ENCODE measurements at regions of chr4 and their contacts with region 1.

Region 1: DNA sequence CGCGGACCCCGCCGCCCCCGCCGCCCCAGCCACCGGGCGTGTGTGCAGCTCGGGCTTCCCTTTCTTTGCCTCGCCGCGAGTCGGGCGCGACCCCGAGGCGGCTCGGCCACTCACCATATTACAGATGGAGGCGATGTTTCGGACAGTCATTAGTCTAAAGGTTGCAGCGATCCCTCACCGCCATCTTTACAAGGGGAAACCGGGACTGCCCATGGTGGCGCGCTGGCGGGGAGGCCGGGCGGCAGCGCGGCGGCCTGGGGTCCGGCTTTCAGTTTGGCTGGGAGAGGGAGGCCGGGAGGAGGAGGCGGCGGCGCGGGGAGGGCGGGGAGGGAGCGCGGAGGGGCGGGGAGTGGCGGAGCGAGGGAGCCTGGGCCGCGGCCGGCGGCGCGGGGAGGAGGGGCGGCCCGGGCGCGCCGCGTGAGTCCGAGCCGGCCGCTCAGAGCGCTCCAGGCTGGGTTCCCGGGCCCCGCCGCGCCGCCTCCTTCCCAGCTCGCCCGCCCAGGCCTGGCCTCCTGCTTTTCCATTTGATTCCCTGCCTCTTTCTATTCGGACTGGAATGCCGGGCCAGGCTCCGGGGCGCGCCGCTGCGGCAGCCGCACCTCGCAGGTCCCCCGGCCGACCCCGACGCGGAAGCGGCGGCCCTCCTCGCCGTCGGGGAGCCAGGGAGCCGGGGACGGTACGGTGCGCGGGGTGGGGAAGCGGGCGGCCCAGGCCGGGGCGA is at the start of gene USP46:
- DNase-seq: peak; percentile 69 to 79
- H3K4me3 ChIP-seq: peak within 1 kb of the TSS; percentile 77
- H3K4me3 Mint-ChIP-seq: peak within 1 kb of the TSS; percentile 84
- H3K27ac Mint-ChIP-seq: peak within 1 kb of the TSS; percentile 39
- H3K4me1 ChIP-seq: peaks cover 16% of the 10 kb centered on the region; the same call in 1 of the 2 replicates
- H3K4me1 Mint-ChIP-seq: peaks cover 36% of the 10 kb centered on the region
- H3K27me3 ChIP-seq: no peaks in the 10 kb centered on the region
- H3K27me3 Mint-ChIP-seq: no peaks in the 10 kb centered on the region
- CTCF ChIP-seq: no peak
- total RNA-seq, gene USP46: 26.4 and 32.2 TPM in 2 replicates

Region 2: GRCh38 chr4:52234561-52235440 is 424.4 kb before region 1 on chr4:
- CTCF ChIA-PET with region 1: no interaction called
- POLR2A ChIA-PET with region 1: no interaction called
- intact Hi-C with region 1: loop called (anchors 10 kb)
- DNase-seq: peak in 1 of 2 experiments; percentile 34
- H3K4me3 ChIP-seq: no peak overlapping the region
- H3K4me3 Mint-ChIP-seq: no peak overlapping the region
- H3K27ac Mint-ChIP-seq: no peak overlapping the region
- H3K4me1 ChIP-seq: no peaks in the 10 kb centered on the region
- H3K4me1 Mint-ChIP-seq: no peaks in the 10 kb centered on the region
- H3K27me3 ChIP-seq: no peaks in the 10 kb centered on the region
- H3K27me3 Mint-ChIP-seq: peaks cover 8% of the 10 kb centered on the region
- CTCF ChIP-seq: peak; percentile 43 to 57

Region 3: DNA sequence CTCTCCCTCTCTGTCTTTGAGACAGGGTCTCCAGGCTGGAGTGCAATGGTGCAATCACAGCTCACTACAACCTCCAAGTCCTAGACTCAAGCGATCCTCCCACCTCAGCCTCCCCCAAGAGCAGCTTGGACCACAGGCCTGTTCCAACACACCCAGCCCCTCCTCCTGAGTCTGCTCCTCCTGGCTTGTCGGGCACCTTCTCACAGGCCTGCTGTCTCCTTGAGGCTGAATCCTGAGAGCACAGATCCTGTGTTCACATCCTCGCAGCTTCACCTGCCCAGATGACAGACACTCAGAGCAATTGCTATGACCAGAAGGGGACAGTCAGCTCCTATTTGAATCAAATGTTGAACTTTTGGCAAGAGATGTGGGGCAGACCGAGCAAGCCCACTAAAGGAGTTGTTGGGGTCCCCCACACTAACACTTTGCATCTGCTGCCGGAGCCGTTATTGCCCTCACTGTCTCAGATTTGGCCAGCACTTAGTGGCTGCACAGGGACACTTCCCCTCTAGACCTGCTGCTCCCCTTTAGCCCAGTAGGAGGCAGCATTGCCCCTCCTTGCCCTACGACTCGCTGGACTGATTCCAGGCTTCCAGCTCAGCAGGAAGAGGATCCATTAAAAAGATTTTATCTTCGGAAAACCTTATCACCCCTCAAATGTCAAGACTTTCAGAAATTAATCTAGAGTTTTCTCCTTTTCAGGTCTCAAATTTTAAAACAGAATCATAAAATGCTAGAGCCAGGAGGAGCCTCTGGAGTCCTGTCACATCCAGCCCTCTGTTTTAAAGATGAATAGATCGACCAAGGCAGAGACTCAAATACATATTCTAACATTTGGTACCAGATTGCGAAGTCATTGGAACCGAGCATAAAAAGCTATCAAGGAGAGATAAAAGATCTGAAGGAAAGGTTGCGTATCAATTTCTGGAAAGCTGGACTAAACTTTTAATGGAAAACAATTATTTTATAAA is 113.8 kb before region 1 on chr4:
- CTCF ChIA-PET with region 1: no interaction called
- POLR2A ChIA-PET with region 1: no interaction called
- intact Hi-C with region 1: loop called (anchors 10 kb)
- DNase-seq: peak; percentile 49 to 74
- H3K4me3 ChIP-seq: no peak overlapping the region
- H3K4me3 Mint-ChIP-seq: no peak overlapping the region
- H3K27ac Mint-ChIP-seq: no peak overlapping the region
- H3K4me1 ChIP-seq: no peaks in the 10 kb centered on the region
- H3K4me1 Mint-ChIP-seq: no peaks in the 10 kb centered on the region
- H3K27me3 ChIP-seq: no peaks in the 10 kb centered on the region; the same call in none of the 2 replicates
- H3K27me3 Mint-ChIP-seq: no peaks in the 10 kb centered on the region
- CTCF ChIP-seq: peak; percentile 84

Region 4: DNA sequence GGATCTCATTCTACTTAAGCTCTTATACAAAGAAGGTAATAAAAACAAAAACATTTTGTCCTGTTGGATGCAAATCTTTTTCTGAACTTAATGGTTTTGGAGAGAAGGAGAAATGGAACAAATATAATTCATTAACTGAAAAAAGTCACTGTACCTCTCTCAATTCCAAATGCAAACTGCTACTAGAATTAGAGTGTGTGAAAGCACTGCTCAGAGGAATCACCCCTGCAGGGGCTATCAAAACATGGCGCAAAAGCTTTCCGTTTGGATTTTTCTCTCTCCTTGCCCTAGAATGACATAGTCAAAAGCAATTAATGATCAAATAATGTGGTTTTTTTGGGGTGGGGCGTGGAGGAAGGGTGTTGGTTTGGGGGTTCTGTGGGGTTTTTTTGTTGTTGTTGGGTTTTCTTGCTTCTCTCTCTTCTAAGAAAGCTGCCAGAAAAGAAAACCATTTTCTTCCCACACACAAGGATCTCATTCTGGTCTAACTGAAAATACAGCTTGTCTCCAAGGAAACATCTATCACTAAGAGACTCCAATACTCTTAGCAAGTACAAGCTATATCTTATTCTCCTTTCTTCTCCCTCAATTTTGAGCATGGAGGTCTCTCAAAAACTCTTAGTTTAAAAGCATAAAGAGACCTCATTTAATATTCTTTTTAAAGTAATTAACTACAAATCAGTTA is 41.7 kb before region 1 on chr4:
- CTCF ChIA-PET with region 1: no interaction called
- POLR2A ChIA-PET with region 1: no interaction called
- intact Hi-C with region 1: loop called (anchors 5 kb)
- DNase-seq: no peak
- H3K4me3 ChIP-seq: no peak overlapping the region
- H3K4me3 Mint-ChIP-seq: no peak overlapping the region
- H3K27ac Mint-ChIP-seq: no peak overlapping the region
- H3K4me1 ChIP-seq: no peaks in the 10 kb centered on the region
- H3K4me1 Mint-ChIP-seq: peaks cover 10% of the 10 kb centered on the region
- H3K27me3 ChIP-seq: no peaks in the 10 kb centered on the region
- H3K27me3 Mint-ChIP-seq: no peaks in the 10 kb centered on the region
- CTCF ChIP-seq: no peak

Region 5: DNA sequence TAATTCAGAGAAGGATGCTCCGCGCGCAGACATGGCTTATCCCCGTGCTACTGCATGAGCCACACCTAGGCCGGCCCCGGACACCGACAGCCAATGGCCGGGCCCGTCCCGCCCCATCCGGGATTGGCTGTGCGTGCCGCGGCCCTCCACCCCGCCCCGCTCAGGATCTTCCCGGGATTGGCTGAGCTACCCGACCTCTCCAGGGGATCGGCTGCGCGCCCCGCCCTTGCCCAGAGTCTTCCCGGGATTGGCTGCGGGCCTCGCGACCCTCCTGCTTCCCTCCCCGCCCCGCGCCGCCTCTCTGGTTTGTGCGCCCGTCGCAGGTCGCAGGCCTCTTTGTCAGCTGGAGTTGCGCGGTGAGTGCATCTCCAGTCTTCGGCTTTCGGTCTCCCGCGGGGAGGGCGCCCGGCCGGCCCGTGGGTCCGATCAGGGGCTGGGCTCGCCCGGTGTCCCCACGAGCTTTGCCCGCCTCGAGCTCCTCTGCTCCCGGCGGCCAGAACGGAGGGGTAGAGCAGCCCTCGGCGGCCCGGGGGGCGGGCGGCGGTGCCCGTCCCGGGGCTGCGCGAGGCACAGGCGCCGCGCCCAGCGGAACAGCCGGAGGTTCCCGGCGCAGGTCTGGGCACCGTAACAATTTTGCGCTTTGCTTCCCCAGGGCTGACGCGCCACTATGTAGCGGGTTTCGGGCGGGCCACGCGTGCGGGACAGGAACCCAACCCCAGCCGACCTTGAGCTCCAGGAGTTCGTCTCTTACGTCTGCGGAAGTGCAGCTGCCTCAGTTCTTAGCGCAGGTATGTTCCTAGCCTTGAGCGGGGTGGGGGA is 53.2 kb after region 1 on chr4:
- CTCF ChIA-PET with region 1: no interaction called
- POLR2A ChIA-PET with region 1: interaction called, 28 read pairs
- intact Hi-C with region 1: loop called (anchors 1 kb)
- DNase-seq: peak; percentile 98 to 99
- H3K4me3 ChIP-seq: peak overlapping the region; percentile 73
- H3K4me3 Mint-ChIP-seq: peak overlapping the region; percentile 88
- H3K27ac Mint-ChIP-seq: peak overlapping the region; percentile 93
- H3K4me1 ChIP-seq: peaks cover 11% of the 10 kb centered on the region
- H3K4me1 Mint-ChIP-seq: peaks cover 12% of the 10 kb centered on the region
- H3K27me3 ChIP-seq: no peaks in the 10 kb centered on the region
- H3K27me3 Mint-ChIP-seq: peaks cover 3% of the 10 kb centered on the region
- CTCF ChIP-seq: no peak

Measured in Caco-2 (cell line).